B cell (primary cell): ENCODE measurements at regions of chr17 and their contacts with region 1.

Region 1: DNA sequence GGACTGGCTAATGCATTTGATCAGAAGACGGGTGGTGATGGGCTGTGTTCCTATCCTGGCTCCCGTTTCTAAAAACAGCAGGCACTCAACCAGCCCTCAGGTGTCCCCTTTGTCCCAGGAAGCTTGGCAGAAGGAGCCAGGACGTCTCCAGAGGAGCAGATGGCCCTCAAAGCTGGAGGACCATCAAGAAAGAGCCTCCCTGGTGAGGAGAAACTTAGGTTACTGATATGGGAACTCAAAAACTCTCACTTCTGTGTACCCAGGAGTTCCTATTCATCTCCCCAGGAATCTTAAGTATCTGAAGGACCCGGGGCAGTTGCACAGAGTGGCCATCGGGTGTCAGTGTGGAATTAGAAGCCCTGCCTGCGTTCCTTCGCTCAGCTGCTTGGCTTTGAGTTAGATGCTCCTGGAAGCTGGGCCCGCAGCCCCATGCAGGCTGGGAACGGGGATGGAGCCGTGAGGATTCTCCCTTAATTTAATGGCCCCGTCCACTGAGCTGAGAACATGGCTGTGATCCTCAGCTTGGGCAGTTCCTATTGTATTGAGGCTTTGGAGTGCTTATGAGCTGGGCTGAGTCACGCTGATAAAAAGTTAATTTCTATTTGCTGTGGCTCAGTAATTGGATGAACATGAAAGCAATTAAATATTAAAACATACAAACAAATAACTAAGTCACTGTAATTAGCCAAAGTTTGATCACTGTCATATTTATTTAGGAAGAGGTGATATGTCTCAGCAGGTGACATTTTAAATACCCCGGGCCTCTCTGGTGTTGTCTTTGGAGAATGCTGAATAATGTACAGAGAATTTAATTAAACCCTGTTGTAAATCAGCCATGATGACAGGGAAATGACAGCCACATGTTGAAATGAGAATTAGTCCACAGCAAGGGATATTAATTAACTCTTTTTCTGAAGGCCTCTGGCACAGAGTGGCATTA is 402.1 kb downstream of the SEC14L1 start:
- DNase-seq: peak; percentile 73
- ATAC-seq: peak; percentile 61
- H3K4me3 ChIP-seq: no peak overlapping the region
- H3K4me3 Mint-ChIP-seq: no peak overlapping the region
- H3K27ac ChIP-seq: no peak overlapping the region
- H3K27ac Mint-ChIP-seq: no peak overlapping the region
- H3K4me1 ChIP-seq: no peaks in the 10 kb centered on the region
- H3K4me1 Mint-ChIP-seq: no peaks in the 10 kb centered on the region
- H3K27me3 ChIP-seq: peaks cover 0 to 16% (median 1%) of the 10 kb centered on the region in 4 experiments
- H3K27me3 Mint-ChIP-seq: peaks cover 33% of the 10 kb centered on the region
- CTCF ChIP-seq: peak; percentile 80

Region 2: DNA sequence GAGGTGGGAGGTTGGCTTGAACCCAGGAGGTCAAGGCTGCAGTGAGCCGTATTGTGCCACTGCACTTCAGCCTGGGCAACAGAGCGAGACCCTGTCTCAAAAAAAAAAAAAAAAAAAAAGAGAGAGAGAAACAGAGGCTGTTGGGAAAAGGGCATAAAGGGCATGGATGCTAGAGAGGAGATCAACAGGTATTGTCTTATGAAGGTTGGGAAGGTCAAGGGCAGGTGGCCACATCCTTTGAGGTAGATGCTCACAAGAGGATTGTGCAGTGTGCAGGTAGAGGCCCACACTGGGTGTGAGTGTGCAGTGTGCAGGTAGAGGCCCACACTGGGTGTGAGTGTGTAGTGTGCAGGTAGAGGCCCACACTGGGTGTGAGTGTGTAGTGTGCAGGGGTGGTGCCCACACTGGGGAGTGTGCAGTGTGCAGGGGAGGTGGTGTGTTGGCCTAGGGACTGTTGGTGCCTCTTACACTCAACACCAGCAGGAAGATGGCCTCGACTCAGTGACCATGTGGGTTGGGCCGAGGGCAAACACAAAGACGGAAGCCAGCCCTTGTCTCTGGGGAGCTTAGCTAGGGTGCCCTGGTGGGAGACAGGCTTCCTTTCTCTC is 10.7 kb after region 1 on chr17:
- CTCF ChIA-PET with region 1: interaction called, 12 read pairs
- POLR2A ChIA-PET with region 1: no interaction called
- intact Hi-C with region 1: no loop called
- DNase-seq: no peak
- ATAC-seq: no peak
- H3K4me3 ChIP-seq: no peak overlapping the region
- H3K4me3 Mint-ChIP-seq: no peak overlapping the region
- H3K27ac ChIP-seq: no peak overlapping the region
- H3K27ac Mint-ChIP-seq: no peak overlapping the region
- H3K4me1 ChIP-seq: peaks cover 0 to 8% of the 10 kb centered on the region in 2 donors
- H3K4me1 Mint-ChIP-seq: peaks cover 9% of the 10 kb centered on the region
- H3K27me3 ChIP-seq: peaks cover 0 to 14% (median 1%) of the 10 kb centered on the region in 4 experiments
- H3K27me3 Mint-ChIP-seq: peaks cover 9% of the 10 kb centered on the region
- CTCF ChIP-seq: no peak

Region 3: DNA sequence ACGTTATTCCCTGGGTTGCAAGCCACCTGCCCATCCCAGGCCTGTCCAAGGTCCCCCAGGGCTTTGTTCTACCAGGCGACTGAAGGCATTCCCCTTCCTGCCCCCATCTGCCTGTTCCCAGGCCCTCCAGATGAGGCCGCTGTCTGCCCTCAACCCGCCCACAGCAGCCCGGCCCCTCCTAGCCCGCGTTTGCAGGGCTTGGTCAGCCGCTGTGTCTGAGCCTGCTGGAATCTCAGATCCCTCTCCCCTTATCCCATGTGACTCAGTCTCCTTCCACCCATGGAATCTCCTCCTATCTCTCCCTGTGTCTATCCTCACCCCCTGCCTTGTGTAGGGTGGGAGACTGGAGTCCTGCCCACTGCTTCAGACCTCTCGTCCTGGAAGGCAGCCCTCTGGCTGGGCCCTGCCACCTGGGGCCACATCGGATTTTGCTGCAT is 229.7 kb after region 1 on chr17:
- CTCF ChIA-PET with region 1: interaction called, 11 read pairs
- POLR2A ChIA-PET with region 1: no interaction called
- intact Hi-C with region 1: loop called (anchors 1 kb)
- DNase-seq: peak; percentile 79
- ATAC-seq: peak; percentile 91
- H3K4me3 ChIP-seq: no peak overlapping the region
- H3K4me3 Mint-ChIP-seq: no peak overlapping the region
- H3K27ac ChIP-seq: no peak overlapping the region
- H3K27ac Mint-ChIP-seq: no peak overlapping the region
- H3K4me1 ChIP-seq: peaks cover 0 to 11% of the 10 kb centered on the region in 2 donors
- H3K4me1 Mint-ChIP-seq: peaks cover 13% of the 10 kb centered on the region
- H3K27me3 ChIP-seq: peaks cover 0 to 4% (median 2%) of the 10 kb centered on the region in 4 experiments
- H3K27me3 Mint-ChIP-seq: peaks cover 8% of the 10 kb centered on the region
- CTCF ChIP-seq: peak; percentile 92

Region 4: GRCh38 chr17:78005452-78006171 is 462.8 kb after region 1 on chr17:
- CTCF ChIA-PET with region 1: interaction called, 14 read pairs
- POLR2A ChIA-PET with region 1: no interaction called
- intact Hi-C with region 1: no loop called
- DNase-seq: no peak
- ATAC-seq: no peak
- H3K4me3 ChIP-seq: no peak overlapping the region
- H3K4me3 Mint-ChIP-seq: no peak overlapping the region
- H3K27ac ChIP-seq: no peak overlapping the region
- H3K27ac Mint-ChIP-seq: no peak overlapping the region
- H3K4me1 ChIP-seq: no peaks in the 10 kb centered on the region
- H3K4me1 Mint-ChIP-seq: peaks cover 16% of the 10 kb centered on the region
- H3K27me3 ChIP-seq: no peaks in the 10 kb centered on the region
- H3K27me3 Mint-ChIP-seq: no peaks in the 10 kb centered on the region
- CTCF ChIP-seq: no peak